ENCODE measurements at regions of chr12 and their contacts with region 1.

Region 1: GRCh38 chr12:107402041-107403022 is 283.3 kb upstream of the PWP1 start:
- DNase-seq: peak; percentile 75
- H3K4me3 Mint-ChIP-seq: no peak overlapping the region
- H3K27ac Mint-ChIP-seq: no peak overlapping the region
- H3K4me1 Mint-ChIP-seq: no peaks in the 10 kb centered on the region
- H3K27me3 Mint-ChIP-seq: peaks cover 21% of the 10 kb centered on the region
- CTCF ChIP-seq: peak; percentile 11

Region 2: GRCh38 chr12:107131832-107132616 is 270.3 kb before region 1 on chr12:
- CTCF ChIA-PET with region 1: interaction called, 14 read pairs
- intact Hi-C with region 1: loop called (anchors 1 kb)
- DNase-seq: peak; percentile 44
- H3K4me3 Mint-ChIP-seq: no peak overlapping the region
- H3K27ac Mint-ChIP-seq: no peak overlapping the region
- H3K4me1 Mint-ChIP-seq: no peaks in the 10 kb centered on the region
- H3K27me3 Mint-ChIP-seq: peaks cover 28% of the 10 kb centered on the region
- CTCF ChIP-seq: peak; percentile 71

Region 3: DNA sequence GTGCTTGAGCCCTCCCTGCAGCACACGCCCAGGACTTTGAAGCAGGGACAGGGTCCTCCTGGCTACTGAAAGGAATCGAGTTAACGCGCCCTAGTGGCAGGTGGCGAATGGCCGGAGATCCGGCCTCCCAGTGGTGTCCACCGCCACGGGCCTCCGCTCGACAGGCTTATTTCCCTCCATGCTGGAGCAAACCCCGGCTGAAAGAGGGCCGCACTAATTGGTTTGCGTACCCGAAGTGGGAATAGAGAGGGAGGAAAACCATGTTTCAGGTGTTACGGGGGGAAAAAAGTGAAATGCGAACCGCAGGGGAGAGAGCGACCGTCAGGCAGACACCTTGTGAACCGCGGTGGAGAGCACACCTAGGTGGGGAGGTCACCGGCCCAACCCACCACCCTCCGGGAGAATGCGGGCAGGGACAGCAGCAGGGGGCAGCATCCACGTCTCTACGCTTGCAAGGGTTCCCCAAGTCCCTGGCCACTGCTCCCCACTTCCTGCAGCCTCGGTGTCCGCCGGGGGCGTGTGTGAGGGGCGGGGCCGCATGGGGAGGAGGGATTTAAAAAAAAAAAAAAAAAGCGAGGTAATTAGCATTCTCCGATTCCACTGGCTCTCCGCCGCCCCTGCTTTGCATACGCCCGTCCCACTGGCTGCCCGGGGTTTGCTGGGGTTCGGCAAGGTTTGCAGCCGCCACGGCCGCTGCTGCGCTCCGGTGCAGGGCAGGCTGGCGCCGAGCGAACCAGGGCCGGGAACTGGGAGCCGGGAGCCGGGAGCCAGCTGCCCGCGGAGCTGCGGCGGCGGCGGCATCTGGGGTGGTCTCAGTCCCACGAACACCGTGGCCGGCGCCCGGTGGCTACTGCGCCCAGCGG is 84.3 kb before region 1 on chr12:
- CTCF ChIA-PET with region 1: interaction called, 3 read pairs
- intact Hi-C with region 1: loop called (anchors 1 kb)
- DNase-seq: peak; percentile 92
- H3K4me3 Mint-ChIP-seq: peak overlapping the region; percentile 91
- H3K27ac Mint-ChIP-seq: peak overlapping the region; percentile 71
- H3K4me1 Mint-ChIP-seq: peaks cover 23% of the 10 kb centered on the region
- H3K27me3 Mint-ChIP-seq: peaks cover 75% of the 10 kb centered on the region
- CTCF ChIP-seq: peak; percentile 63

Region 4: DNA sequence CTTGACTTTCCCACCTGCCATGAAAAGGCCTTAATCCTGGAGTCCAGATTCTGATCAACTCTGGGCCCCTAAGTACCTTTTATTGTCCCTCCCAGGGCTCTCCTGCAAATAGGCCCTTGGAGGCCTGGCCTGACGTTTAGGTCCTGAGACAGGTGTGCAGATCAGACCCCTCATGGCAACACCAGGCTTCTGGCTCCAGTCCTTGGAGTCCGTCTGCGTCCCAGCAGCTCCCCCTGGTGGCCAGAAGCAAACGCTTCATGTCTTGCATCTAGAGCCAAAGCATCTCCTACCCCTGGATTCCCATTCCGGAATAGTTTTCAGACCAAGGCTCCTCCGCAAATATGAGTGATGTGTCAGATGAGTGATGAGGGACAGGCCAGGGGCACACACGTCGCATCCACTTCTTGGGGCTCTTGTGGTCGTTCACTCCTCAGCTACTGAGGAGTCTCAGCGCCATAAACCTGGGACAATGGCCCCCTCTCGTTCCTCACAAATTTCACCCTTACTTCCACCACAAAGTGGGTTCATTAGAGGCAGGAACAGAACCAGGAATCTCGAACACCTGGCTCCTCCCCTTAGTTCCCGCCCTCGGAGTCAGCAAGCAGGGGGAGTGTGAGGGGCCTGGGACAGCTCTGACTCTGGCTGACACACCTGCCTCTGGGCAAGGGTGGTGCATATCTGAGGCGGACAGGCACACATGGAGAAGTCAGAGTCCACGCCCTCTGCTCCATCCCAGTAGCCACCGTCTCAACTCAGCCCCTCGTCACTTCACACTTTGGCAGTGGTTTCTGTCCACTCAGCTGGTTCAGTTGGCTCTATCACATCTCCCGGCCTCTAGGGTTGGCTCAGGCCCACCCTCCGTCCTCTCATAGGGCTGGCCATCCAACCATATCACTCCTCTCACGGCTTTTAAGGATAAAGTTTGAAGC is 205.4 kb after region 1 on chr12:
- CTCF ChIA-PET with region 1: interaction called, 4 read pairs
- intact Hi-C with region 1: loop called (anchors 2 kb)
- DNase-seq: peak; percentile 89
- H3K4me3 Mint-ChIP-seq: no peak overlapping the region
- H3K27ac Mint-ChIP-seq: no peak overlapping the region
- H3K4me1 Mint-ChIP-seq: no peaks in the 10 kb centered on the region
- H3K27me3 Mint-ChIP-seq: peaks cover 61% of the 10 kb centered on the region
- CTCF ChIP-seq: peak; percentile 90

Measured in Calu3 (cell line).